ENCODE measurements at regions of chr5 and their contacts with region 1.

Region 1: DNA sequence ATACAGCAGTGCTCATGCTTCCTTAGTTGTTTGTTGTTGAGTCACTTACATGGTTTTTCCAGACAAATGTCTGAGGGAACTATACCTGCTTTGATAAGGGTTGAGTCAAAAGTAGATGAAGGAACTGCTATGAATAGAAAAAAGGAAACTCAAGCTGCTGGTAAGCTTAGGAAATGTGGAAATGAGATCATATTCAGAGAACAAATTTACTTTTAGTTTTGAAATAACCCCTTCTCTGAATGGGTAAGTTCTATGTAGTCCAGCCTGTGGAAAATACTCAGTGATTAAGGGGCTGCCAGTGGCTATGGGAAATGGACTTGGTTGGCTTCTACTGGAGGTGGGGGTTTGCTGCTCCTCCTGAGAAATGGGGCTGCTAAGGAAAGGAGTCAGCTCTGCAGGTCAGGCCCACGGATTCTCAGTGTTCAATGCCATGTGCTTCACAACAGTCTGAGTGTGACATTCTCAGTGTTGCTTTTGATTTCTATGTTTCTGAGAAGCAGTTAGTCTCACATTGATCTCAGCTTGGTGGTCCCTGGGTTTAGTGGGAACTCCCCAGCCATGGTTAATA is 47.7 kb upstream of the GLRX start:
- DNase-seq: peak; percentile 71
- H3K4me3 Mint-ChIP-seq: peak overlapping the region; percentile 54
- H3K27ac Mint-ChIP-seq: peak overlapping the region; percentile 98
- H3K4me1 Mint-ChIP-seq: peaks cover 58% of the 10 kb centered on the region
- H3K27me3 Mint-ChIP-seq: no peaks in the 10 kb centered on the region

Region 2: DNA sequence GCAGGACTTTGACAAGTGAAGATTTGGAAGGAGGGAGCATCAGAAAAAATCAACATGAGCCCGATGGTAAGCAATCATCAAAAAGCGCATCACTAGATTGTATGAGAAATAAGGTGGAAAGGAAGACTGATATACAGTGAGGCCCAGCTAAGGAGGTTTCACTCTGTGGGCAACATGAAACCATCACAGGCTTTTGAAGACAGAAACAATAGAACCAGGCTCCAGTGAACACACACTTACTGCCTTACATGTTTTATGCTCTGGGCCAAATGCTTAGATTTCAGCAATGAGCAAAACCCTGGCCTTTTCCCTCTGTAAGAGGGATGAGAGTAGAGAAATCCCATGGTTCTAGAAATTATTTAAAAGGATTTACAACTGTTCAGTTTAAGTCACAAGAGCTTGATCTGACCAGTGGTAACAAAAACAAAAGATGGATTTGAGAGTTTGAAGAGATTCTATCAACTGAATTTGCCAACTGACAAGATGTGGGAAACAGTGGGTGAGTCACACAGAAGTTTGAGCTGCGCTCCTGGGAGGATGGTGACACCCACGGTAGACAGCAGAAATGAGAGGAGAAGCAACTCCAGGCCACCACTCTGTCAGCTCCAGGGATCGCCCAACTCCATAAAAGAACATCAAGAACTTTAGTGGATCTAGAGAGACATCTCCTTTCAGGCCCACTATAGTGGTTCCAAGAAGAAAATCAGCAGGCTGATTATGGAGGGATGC is 847.1 kb before region 1 on chr5:
- CTCF ChIA-PET with region 1: no interaction called
- POLR2A ChIA-PET with region 1: no interaction called
- intact Hi-C with region 1: no loop called
- DNase-seq: no peak
- H3K4me3 Mint-ChIP-seq: no peak overlapping the region
- H3K27ac Mint-ChIP-seq: no peak overlapping the region
- H3K4me1 Mint-ChIP-seq: no peaks in the 10 kb centered on the region
- H3K27me3 Mint-ChIP-seq: no peaks in the 10 kb centered on the region

Region 3: DNA sequence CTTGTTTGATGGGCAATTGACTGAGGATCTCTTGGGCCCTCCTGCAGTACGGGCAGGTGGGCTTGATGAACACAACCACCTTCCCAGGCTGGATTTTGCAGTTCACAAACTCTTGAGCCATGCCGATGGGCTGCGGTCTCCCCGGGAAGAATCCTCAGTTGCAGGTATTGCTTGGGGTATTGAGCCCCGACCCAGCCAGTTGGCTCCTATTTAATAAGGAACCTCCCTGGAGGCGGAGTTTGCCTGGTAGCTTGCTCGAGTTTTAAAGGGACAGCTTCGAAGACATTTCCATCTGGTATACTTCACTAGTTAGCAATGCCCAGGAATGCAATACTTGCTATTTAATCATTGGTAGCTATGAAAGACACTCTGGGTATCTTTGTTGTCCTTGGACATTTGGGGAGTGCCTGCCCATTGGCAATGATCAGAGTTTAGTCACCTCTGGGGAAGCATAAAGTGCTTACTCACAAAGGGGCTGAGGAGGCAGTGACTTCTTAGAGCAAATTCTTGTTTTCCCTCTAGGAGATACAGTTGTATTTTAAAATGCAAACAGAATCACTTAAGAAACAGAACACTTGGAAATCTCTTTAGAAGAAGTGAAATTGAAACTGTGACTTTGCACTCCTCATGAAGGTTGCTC is 47.5 kb before region 1 on chr5 and contains the start of gene GLRX:
- CTCF ChIA-PET with region 1: interaction called, 4 read pairs
- POLR2A ChIA-PET with region 1: interaction called, 4 read pairs
- intact Hi-C with region 1: loop called (anchors 1 kb)
- DNase-seq: peak; percentile 61
- H3K4me3 Mint-ChIP-seq: peak within 1 kb of the TSS; percentile 94
- H3K27ac Mint-ChIP-seq: peak within 1 kb of the TSS; percentile 90
- H3K4me1 Mint-ChIP-seq: peaks cover 65% of the 10 kb centered on the region
- H3K27me3 Mint-ChIP-seq: no peaks in the 10 kb centered on the region
- total RNA-seq, gene GLRX: 33.2 to 34.0 TPM

Region 4: DNA sequence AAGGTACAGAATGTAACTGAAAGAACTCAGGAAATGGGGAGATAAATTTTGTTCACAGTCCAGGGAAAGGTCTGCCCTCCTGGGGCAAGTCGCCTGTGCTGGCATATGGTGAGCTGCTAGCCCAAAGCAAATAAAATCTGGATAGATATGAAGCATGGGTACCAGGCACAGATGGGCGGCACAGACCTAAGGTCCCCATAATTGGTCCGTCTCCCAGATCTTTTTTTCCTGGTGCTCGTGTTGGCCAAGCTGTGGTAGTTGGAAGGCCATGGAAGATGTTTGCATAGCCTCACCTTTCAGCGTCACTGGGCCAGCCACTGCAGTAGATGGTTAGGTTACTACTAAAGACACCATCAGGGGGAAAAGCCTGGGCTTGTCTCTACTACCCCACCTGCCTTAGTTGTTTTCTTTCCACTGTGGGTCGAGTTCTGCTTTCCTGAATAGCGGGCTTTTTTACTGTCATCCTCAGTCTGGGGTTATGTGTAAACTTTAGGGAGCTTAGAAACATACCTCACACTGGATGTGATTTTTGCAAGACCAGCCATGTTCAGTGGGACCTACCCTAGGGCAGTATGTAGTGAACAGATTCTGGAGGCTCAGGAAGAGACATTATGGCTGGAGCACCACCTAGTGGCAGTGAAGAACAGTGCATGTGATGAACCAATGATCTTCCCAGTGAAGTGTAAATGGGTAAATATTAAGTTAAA is 23.5 kb before region 1 on chr5:
- CTCF ChIA-PET with region 1: interaction called, 6 read pairs
- POLR2A ChIA-PET with region 1: no interaction called
- intact Hi-C with region 1: loop called (anchors 2 kb)
- DNase-seq: peak; percentile 76
- H3K4me3 Mint-ChIP-seq: no peak overlapping the region
- H3K27ac Mint-ChIP-seq: peak overlapping the region; percentile 62
- H3K4me1 Mint-ChIP-seq: peaks cover 15% of the 10 kb centered on the region
- H3K27me3 Mint-ChIP-seq: no peaks in the 10 kb centered on the region

Region 5: DNA sequence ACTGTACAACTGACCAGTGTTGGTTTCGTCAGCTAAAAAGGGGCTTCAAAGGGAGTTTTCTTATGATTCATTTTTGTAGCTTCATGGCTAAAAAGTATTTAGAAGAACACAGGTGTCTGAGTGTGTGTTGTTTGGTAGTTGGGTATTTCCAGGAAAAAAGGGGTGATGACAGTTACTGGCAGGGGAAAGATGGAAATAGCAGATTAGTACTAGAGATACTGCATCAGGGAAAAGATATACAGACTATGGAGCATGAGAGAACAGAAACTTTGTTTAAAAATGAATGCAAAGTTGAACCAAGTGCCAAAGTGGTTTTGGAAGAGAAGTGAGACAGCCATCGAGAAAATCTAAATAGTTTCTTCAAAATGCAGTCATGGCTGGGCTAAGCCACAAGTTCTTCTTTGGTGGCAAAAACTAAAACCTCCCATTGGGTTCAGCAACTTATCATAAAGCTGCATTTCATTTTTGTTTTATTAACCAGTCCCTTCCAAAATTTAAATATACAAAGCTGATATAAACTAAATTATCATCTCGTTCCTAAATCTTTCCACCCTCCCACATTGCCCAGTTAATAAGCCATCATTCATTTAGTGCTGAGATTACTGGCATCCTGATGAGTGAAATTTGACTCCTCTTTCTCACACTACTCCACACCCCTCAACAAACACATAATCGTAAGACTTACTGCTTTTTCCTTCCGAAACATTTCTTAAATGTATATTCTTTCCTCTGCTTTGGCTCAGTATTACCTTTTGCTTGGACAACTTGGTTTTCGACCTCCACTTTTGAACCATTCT is 57.9 kb after region 1 on chr5:
- CTCF ChIA-PET with region 1: interaction called, 3 read pairs
- POLR2A ChIA-PET with region 1: interaction called, 5 read pairs
- intact Hi-C with region 1: loop called (anchors 1 kb)
- DNase-seq: no peak
- H3K4me3 Mint-ChIP-seq: no peak overlapping the region
- H3K27ac Mint-ChIP-seq: peak overlapping the region; percentile 84
- H3K4me1 Mint-ChIP-seq: peaks cover 46% of the 10 kb centered on the region
- H3K27me3 Mint-ChIP-seq: no peaks in the 10 kb centered on the region

Region 6: DNA sequence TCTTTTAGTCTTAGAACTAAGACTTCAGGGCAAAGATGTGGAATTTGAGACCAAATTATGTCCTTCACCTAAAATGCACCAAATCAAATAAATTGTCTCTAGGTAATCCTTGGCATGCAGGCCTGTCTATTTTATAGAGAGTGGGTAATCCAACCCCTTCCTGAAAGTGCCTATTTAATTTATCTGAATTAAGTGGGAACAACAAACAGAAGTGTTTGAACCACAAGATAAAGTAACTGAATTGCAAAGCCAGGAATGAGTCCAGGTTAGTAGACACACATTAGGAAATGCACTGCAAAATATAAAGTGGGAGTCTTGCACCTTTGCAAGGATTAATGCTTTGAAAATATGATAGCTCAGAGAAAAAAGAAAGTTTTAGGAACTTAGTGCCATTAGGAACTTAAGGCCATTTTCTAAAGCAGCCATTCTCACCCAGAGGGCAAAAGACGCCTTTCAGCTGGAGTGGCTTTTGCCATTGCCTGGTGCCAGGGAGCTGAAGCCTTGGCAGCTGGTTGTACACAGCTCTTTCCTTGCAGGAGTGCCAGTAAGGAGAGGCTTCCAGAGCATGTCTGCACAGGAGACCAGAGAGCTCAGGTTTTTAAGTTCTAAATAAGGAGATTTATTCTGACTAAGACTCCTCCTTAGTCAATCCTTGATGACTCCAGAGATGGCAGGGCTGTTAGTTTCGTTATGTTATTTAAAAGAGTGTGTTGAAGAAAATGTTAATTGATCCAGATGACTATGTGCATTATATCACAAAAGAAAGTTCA is 243.2 kb after region 1 on chr5:
- CTCF ChIA-PET with region 1: interaction called, 5 read pairs
- POLR2A ChIA-PET with region 1: no interaction called
- intact Hi-C with region 1: loop called (anchors 1 kb)
- DNase-seq: peak; percentile 13
- H3K4me3 Mint-ChIP-seq: no peak overlapping the region
- H3K27ac Mint-ChIP-seq: no peak overlapping the region
- H3K4me1 Mint-ChIP-seq: peaks cover 41% of the 10 kb centered on the region
- H3K27me3 Mint-ChIP-seq: peaks cover 4% of the 10 kb centered on the region

Region 7: GRCh38 chr5:96279801-96280542 is 409.8 kb after region 1 on chr5:
- CTCF ChIA-PET with region 1: no interaction called
- POLR2A ChIA-PET with region 1: no interaction called
- intact Hi-C with region 1: loop called (anchors 1 kb)
- DNase-seq: peak; percentile 51
- H3K4me3 Mint-ChIP-seq: peak overlapping the region; percentile 7
- H3K27ac Mint-ChIP-seq: peak overlapping the region; percentile 31
- H3K4me1 Mint-ChIP-seq: peaks cover 26% of the 10 kb centered on the region
- H3K27me3 Mint-ChIP-seq: peaks cover 29% of the 10 kb centered on the region

Region 8: DNA sequence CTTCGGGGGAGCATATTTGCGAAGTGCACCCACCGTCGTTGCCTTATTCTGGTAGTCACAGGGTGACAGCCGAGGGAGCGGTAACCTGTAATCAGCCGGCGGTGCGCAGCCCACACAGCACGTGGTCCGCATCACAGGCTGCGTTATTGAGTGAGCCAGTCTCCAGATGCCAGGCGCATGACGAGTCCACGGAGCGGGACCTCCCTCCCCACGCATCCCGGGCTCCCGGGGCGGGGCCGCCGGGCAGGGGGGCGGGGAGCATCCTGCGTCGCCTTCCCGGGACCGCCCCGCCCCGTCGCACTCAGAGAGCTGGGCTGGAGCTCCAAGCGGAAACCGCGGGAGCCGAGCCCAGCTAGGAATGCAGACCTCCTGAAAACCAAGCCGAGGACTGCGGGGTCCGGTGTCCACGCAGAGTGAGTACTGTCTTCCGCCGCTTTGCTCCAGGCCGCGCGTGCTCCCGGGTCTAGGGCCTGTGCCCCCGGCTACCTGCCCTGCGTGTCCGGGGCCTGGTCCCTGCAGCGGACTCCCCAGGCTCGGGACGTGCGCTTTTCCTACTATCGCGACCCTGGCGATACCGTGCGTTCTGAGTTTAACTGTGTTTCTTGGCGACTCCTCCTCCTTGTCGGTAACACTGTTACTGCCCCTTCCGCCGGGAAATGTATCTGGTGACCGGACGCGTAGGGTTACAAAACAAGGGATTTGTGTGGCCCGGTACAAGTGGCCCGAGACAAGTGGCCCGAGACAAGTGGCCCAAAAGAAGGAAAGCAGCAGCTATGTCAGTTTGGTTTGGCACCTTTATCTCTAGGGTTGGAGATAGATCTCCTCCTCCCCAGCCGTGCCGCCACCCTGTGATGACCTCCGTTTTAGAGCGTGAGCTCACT is 832.6 kb after region 1 on chr5:
- CTCF ChIA-PET with region 1: no interaction called
- POLR2A ChIA-PET with region 1: no interaction called
- intact Hi-C with region 1: loop called (anchors 5 kb)
- DNase-seq: peak; percentile 92
- H3K4me3 Mint-ChIP-seq: peak overlapping the region; percentile 84
- H3K27ac Mint-ChIP-seq: peak overlapping the region; percentile 85
- H3K4me1 Mint-ChIP-seq: peaks cover 52% of the 10 kb centered on the region
- H3K27me3 Mint-ChIP-seq: no peaks in the 10 kb centered on the region